WTC11 (cell line): ENCODE measurements at regions of chr11 and their contacts with region 1.

Region 1: GRCh38 chr11:79100093-79100910 is 340.5 kb downstream of the TENM4 start:
- DNase-seq: peak; percentile 56
- ATAC-seq: peak; percentile 93
- H3K4me3 Mint-ChIP-seq: no peak overlapping the region
- H3K27ac Mint-ChIP-seq: no peak overlapping the region
- H3K4me1 Mint-ChIP-seq: peaks cover 6% of the 10 kb centered on the region
- H3K27me3 Mint-ChIP-seq: no peaks in the 10 kb centered on the region; the same call in 1 of the 2 replicates
- CTCF ChIP-seq: peak; percentile 70

Region 2: DNA sequence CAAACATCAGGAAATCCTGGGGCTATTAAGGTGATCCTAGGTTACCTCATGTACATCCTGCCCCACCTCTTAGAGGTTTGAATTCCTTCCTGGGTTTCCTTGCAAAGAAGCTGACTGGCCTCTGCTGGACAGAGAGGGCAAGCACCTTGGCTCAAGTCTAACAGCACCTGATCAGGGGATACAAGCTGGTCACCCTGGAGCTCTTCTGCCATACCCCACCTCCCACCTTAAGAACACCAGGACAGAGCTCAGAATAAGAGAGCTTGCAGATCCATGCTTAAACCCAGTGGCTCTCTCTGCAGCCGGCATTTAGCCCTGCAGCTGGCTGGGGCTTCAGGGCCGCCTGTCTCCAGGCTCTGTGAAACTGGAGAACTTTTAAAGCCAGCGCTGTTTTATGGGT is 139.1 kb before region 1 on chr11:
- CTCF ChIA-PET with region 1: interaction called, 13 read pairs
- POLR2A ChIA-PET with region 1: no interaction called
- DNase-seq: peak; percentile 61
- ATAC-seq: peak; percentile 89
- H3K4me3 Mint-ChIP-seq: peak overlapping the region; percentile 72
- H3K27ac Mint-ChIP-seq: no peak overlapping the region
- H3K4me1 Mint-ChIP-seq: peaks cover 33% of the 10 kb centered on the region
- H3K27me3 Mint-ChIP-seq: peaks cover 17% of the 10 kb centered on the region
- CTCF ChIP-seq: peak; percentile 21; the same call in 1 of the 2 replicates

Region 3: DNA sequence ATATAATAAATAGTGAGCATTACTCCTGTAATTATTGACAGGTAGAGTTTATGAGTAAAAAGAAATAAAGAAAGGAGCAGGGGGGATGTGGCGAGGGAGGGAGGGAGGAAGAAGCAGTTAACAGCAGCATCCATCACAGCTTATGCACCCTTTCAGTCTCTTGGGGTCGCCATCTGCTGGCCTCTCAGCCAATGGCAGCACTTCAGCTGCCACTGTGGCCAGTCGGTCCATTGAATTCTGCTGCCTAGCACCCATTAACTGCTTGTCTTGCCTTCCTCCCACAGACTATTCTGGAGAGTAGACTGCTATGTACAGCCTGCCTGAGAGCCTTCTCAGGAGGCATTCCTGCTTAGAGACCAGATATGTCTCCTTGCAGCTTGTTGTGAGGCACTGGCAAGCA is 47.8 kb before region 1 on chr11:
- CTCF ChIA-PET with region 1: interaction called, 16 read pairs
- POLR2A ChIA-PET with region 1: no interaction called
- DNase-seq: peak; percentile 55
- ATAC-seq: peak; percentile 94
- H3K4me3 Mint-ChIP-seq: no peak overlapping the region
- H3K27ac Mint-ChIP-seq: no peak overlapping the region
- H3K4me1 Mint-ChIP-seq: peaks cover 9% of the 10 kb centered on the region
- H3K27me3 Mint-ChIP-seq: no peaks in the 10 kb centered on the region
- CTCF ChIP-seq: peak; percentile 30; the same call in 1 of the 2 replicates

Region 4: GRCh38 chr11:79062814-79063762 is 37.2 kb before region 1 on chr11:
- CTCF ChIA-PET with region 1: interaction called, 11 read pairs
- POLR2A ChIA-PET with region 1: no interaction called
- DNase-seq: peak; percentile 62
- ATAC-seq: peak; percentile 76
- H3K4me3 Mint-ChIP-seq: no peak overlapping the region
- H3K27ac Mint-ChIP-seq: no peak overlapping the region
- H3K4me1 Mint-ChIP-seq: peaks cover 40% of the 10 kb centered on the region
- H3K27me3 Mint-ChIP-seq: no peaks in the 10 kb centered on the region; the same call in 1 of the 2 replicates
- CTCF ChIP-seq: no peak

Region 5: GRCh38 chr11:79081471-79082031 is 18.8 kb before region 1 on chr11:
- CTCF ChIA-PET with region 1: interaction called, 65 read pairs
- POLR2A ChIA-PET with region 1: no interaction called
- DNase-seq: no peak
- ATAC-seq: no peak
- H3K4me3 Mint-ChIP-seq: no peak overlapping the region
- H3K27ac Mint-ChIP-seq: no peak overlapping the region
- H3K4me1 Mint-ChIP-seq: peaks cover 4% of the 10 kb centered on the region; the same call in 1 of the 2 replicates
- H3K27me3 Mint-ChIP-seq: no peaks in the 10 kb centered on the region
- CTCF ChIP-seq: no peak

Region 6: DNA sequence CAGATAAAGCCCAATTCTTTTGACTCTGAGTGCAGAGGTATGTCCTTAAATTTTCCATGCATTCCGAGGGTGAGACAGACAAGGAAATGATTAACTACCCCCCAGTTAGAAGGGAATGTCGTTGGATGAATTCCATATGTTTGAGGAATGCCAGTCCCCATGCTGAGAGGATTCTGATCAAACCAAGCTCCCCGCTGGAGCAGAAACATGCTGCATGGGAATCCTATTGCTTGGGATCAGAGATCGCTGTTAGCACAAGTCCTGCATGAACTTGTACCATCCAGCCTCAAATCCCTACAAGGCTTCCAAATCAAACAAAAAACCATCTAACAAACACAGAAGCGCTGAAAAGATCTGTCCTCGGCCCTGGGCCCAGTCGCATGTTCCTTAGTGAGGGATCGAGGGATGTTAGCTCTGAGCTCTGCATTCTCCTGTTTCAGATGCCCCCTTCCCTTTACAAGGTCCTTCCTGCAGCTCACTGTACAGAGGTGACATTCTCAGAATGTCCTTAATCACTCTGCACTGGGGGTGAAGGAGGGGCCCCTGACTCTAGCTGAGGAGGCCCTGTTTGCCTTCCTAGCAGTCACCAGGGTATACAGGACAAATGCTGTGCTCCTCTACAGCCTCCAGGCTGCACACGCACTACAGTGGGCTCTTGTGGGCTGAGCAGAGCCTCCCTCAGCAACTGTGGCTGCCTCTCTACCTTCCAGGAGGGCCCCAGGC is 12.9 kb before region 1 on chr11:
- CTCF ChIA-PET with region 1: interaction called, 65 read pairs
- POLR2A ChIA-PET with region 1: no interaction called
- DNase-seq: no peak
- ATAC-seq: peak; percentile 60
- H3K4me3 Mint-ChIP-seq: no peak overlapping the region
- H3K27ac Mint-ChIP-seq: peak overlapping the region; percentile 17
- H3K4me1 Mint-ChIP-seq: peaks cover 34% of the 10 kb centered on the region
- H3K27me3 Mint-ChIP-seq: no peaks in the 10 kb centered on the region
- CTCF ChIP-seq: no peak